ENCODE measurements at regions of chr19 and their contacts with region 1.

Region 1: GRCh38 chr19:14405758-14406644 is 13.1 kb downstream of the DDX39A start:
- DNase-seq: peak; percentile 76
- H3K4me3 Mint-ChIP-seq: no peak overlapping the region
- H3K27ac Mint-ChIP-seq: no peak overlapping the region
- H3K4me1 Mint-ChIP-seq: peaks cover 15% of the 10 kb centered on the region
- H3K27me3 Mint-ChIP-seq: no peaks in the 10 kb centered on the region
- CTCF ChIP-seq: peak; percentile 79

Region 2: DNA sequence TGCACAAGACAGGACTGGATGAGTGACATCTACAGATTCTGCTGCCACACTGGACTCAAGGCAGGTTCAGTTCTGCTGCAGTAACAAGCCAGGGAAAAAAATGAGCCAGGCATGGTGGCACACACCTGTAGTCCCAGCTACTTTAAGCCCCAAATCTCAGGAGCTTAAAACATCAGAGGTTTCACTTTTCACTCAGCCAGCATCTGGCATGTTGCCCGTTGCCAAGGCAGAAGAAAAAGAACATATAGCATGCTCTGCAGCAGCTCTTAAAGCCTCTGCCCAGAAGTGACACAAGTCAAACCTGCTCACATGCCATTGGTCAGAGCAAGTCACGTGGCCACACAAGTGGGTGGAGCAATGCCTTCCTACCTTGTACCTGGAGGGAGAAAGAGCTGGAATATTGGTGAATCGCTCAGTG is 39.5 kb before region 1 on chr19:
- CTCF ChIA-PET with region 1: interaction called, 5 read pairs
- POLR2A ChIA-PET with region 1: no interaction called
- intact Hi-C with region 1: loop called (anchors 1 kb)
- DNase-seq: peak; percentile 94
- H3K4me3 Mint-ChIP-seq: no peak overlapping the region
- H3K27ac Mint-ChIP-seq: peak overlapping the region; percentile 46
- H3K4me1 Mint-ChIP-seq: peaks cover 20% of the 10 kb centered on the region
- H3K27me3 Mint-ChIP-seq: no peaks in the 10 kb centered on the region
- CTCF ChIP-seq: no peak

Measured in MCF 10A (cell line).